Sigmoid colon (tissue), 7 donors: ENCODE measurements at regions of chr6 and their contacts with region 1.

Region 1: DNA sequence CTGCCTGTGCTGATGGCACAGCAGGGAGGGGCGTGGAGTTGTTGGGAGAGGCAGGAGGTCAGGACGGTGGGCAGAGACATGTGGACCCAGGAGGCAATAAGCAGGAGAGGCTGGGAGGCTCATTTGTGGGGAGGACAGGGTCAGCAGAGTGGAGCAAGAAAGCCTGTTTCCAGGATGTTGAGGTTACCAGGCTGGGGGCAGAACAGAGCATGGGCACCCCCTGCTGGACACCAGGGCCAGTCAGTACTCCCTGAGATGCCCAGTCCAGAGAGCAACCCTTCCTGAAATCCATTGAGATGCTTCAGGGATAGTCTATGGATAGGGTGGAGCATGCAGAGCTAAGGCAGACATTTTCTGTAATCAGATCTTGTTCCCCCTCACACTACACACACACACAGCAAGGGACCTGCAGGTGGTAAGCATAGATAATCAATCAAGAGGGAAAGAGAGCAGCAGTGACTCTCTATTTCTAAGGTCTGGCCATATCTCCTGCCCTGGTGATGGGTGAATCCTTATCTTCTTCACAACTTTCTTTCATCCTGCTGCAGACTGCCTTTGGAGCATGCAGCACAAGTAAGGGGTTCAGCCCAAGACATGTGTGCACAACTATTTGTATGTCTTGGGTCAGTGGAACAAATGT is 41.7 kb downstream of the MOCS1 start:
- DNase-seq: no peak
- H3K4me3 ChIP-seq: no peak overlapping the region
- H3K27ac ChIP-seq: peak overlapping the region in 2 of 4 donors; percentile 16 to 77
- H3K4me1 ChIP-seq: peaks cover 0 to 11% (median 10%) of the 10 kb centered on the region in 4 donors
- H3K27me3 ChIP-seq: no peaks in the 10 kb centered on the region
- CTCF ChIP-seq: peak; percentile 46 to 69 (median 66)
- EP300 ChIP-seq: no peak
- POLR2A ChIP-seq: no peak

Region 2: GRCh38 chr6:39361657-39362486 is 530.7 kb before region 1 on chr6:
- intact Hi-C with region 1: loop called (anchors 5 kb)
- DNase-seq: peak; percentile 81
- H3K4me3 ChIP-seq: no peak overlapping the region
- H3K27ac ChIP-seq: peak overlapping the region in 1 of 4 donors; percentile 14
- H3K4me1 ChIP-seq: peaks cover 0 to 5% (median 0%) of the 10 kb centered on the region in 4 donors
- H3K27me3 ChIP-seq: no peaks in the 10 kb centered on the region
- CTCF ChIP-seq: peak; percentile 54 to 93 (median 58)
- EP300 ChIP-seq: no peak
- POLR2A ChIP-seq: no peak

Region 3: GRCh38 chr6:39377539-39377950 is 515.1 kb before region 1 on chr6:
- intact Hi-C with region 1: loop called (anchors 5 kb)
- DNase-seq: peak; percentile 85
- H3K4me3 ChIP-seq: no peak overlapping the region
- H3K27ac ChIP-seq: peak overlapping the region in 1 of 4 donors; percentile 22
- H3K4me1 ChIP-seq: peaks cover 0 to 4% (median 0%) of the 10 kb centered on the region in 4 donors
- H3K27me3 ChIP-seq: no peaks in the 10 kb centered on the region
- CTCF ChIP-seq: peak; percentile 53 to 63 (median 58)
- EP300 ChIP-seq: no peak
- POLR2A ChIP-seq: no peak

Region 4: DNA sequence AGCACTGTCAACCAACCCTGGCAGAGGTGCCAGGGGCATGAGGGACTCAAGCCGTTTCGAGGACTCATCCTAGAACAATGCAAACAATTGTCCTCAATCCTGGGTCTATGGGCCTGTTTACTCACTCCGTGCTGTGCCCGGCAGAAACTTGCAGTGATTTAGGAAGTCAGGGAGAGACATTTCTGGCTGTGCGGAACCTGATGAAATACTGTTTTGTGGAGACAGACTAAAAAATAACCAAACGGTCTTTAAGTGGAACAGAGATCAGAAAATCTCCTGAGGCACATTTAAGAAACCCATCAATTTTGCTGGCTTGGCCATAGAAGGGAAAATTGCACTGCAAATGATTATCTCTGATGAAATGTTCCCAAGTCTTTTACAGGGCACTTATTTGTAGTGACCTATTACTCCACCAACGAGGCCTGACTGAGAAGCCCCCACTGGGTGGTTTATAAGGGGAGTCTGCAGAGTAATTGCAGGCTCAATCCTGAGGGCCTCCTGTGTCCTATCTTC is 490.3 kb before region 1 on chr6:
- intact Hi-C with region 1: no loop called
- DNase-seq: no peak
- H3K4me3 ChIP-seq: no peak overlapping the region
- H3K27ac ChIP-seq: no peak overlapping the region
- H3K4me1 ChIP-seq: no peaks in the 10 kb centered on the region
- H3K27me3 ChIP-seq: no peaks in the 10 kb centered on the region
- CTCF ChIP-seq: no peak
- EP300 ChIP-seq: no peak
- POLR2A ChIP-seq: no peak